Activated CD4-positive, alpha-beta memory T cell treated with anti-CD3 and anti-CD28 coated beads for 36 hours (primary cell): ENCODE measurements at regions of chr12 and their contacts with region 1.

Region 1: GRCh38 chr12:64610149-64610678 is at the start of gene RASSF3:
- DNase-seq: peak; percentile 83
- H3K4me3 Mint-ChIP-seq: peak within 1 kb of the TSS; percentile 95
- H3K27ac Mint-ChIP-seq: peak within 1 kb of the TSS; percentile 98
- H3K4me1 Mint-ChIP-seq: peaks cover 37% of the 10 kb centered on the region
- H3K27me3 Mint-ChIP-seq: no peaks in the 10 kb centered on the region
- total RNA-seq, gene RASSF3: 40.6 to 40.7 TPM

Region 2: DNA sequence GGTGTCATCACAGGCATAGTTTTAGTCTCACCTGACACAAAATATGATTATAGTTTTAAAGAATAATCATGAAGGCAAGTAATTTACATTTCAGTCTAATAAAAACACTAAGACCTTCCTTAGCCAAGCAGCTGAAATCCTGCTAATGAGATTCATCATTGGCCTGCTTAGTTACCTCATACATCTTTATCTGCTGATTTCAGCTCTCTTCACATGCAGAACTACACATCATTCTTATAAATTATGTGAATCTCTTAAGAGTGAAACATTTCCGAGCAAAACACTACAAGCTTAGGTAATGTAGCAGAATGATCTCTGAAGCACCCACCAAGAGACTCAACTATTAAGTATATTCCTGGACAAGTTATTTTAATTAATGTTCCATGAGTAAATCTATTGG is 1140.1 kb before region 1 on chr12:
- CTCF ChIA-PET with region 1: no interaction called
- POLR2A ChIA-PET with region 1: no interaction called
- intact Hi-C with region 1: no loop called
- DNase-seq: no peak
- H3K4me3 Mint-ChIP-seq: no peak overlapping the region
- H3K27ac Mint-ChIP-seq: no peak overlapping the region
- H3K4me1 Mint-ChIP-seq: no peaks in the 10 kb centered on the region
- H3K27me3 Mint-ChIP-seq: no peaks in the 10 kb centered on the region

Region 3: DNA sequence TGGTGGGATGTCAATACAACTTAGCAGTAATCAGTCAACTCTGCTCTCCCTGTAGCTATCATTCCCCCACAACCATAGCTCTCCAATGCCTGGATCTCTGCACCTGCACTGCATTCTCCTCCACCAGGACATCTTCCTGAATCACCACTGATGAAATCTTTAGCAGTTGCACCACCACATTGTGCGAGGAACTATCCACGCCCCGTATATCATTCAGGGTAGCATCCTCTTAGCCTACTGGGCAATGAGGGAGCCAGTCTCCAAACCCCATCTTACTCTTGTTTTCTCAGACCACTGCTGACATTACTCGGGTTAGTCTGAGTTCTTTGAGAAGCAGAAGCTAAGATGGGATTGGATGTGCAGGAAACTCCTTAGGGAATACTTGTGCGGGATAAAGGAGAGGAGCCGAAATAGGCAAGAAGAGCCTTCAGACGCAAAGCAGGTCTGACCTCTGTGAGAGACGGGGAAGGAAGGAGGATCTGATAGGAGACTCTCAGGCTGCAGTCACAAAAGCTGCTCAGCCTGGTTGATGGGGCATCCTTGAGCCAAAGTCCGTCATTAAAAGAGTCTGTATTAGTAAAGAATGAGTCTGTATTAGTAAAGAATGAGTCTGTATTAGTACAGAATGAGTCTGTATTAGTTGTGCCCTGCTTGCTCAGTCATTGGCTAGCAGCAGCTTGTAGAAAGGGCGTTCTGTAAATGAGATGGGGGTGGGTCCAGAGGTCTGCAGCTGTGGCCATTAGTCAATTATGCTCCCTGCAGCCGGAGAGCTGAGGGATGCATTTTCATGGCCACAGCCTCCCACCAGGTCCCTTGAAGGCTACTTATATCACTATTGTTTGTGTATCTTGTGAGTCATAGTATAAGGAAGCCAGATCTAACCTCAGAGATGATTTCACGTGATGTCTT is 49.6 kb before region 1 on chr12:
- CTCF ChIA-PET with region 1: no interaction called
- POLR2A ChIA-PET with region 1: no interaction called
- intact Hi-C with region 1: no loop called
- DNase-seq: peak; percentile 12
- H3K4me3 Mint-ChIP-seq: no peak overlapping the region
- H3K27ac Mint-ChIP-seq: no peak overlapping the region
- H3K4me1 Mint-ChIP-seq: peaks cover 2% of the 10 kb centered on the region
- H3K27me3 Mint-ChIP-seq: no peaks in the 10 kb centered on the region

Region 4: DNA sequence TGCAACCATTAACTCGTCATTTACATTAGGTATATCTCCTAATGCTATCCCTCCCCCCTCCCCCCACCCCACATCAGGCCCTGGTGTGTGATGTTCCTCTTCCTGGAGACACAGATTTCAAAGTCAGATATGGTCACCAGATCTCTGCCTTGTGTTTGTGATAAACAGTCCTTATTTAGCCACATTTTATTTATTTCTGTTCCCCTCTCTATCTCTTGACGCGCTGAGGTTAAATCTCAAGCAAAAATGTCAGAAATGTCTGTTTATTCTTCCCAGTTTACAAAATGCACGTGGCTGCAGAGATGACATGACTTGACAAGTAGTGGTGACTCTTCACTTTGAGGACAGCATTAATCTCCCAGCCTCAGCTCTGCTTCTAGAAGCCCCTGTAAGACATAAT is 11.4 kb before region 1 on chr12:
- CTCF ChIA-PET with region 1: interaction called, 6 read pairs
- POLR2A ChIA-PET with region 1: interaction called, 3 read pairs
- intact Hi-C with region 1: loop called (anchors 1 kb)
- DNase-seq: no peak
- H3K4me3 Mint-ChIP-seq: peak overlapping the region; percentile 8
- H3K27ac Mint-ChIP-seq: peak overlapping the region; percentile 6
- H3K4me1 Mint-ChIP-seq: peaks cover 38% of the 10 kb centered on the region
- H3K27me3 Mint-ChIP-seq: no peaks in the 10 kb centered on the region

Region 5: DNA sequence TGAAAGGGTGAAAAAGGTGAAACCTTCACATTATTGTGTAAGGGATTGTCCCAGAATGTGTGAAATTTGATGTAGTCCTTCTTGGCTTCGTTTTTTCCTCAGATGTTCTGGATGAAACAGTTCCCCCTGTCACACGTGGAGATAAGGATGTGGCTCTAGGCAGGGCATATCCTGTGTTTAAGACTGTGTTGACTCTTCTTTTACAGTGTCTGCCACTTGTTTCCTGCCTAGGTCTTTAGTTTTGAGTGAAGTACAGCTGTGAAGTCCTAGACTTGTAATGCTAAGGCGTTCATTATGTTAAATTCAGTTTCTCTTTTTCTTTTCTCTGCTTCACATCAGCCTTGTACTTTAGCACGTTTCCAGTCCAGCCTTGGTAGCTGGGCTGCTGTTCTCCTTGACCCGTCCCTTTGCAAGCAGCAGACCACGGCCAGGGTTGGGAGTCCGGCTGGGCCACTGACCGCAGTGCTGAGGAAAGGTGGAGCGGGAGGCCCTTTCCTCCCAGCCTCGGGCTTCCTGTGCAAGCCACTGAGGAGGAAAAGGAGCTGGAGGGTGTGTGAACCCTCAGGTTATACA is 59.1 kb after region 1 on chr12:
- CTCF ChIA-PET with region 1: interaction called, 22 read pairs
- POLR2A ChIA-PET with region 1: interaction called, 19 read pairs
- intact Hi-C with region 1: loop called (anchors 2 kb)
- DNase-seq: peak; percentile 50
- H3K4me3 Mint-ChIP-seq: peak overlapping the region; percentile 85
- H3K27ac Mint-ChIP-seq: peak overlapping the region; percentile 96
- H3K4me1 Mint-ChIP-seq: peaks cover 91% of the 10 kb centered on the region
- H3K27me3 Mint-ChIP-seq: no peaks in the 10 kb centered on the region

Region 6: GRCh38 chr12:64687816-64688215 is 77.6 kb after region 1 on chr12:
- CTCF ChIA-PET with region 1: interaction called, 8 read pairs
- POLR2A ChIA-PET with region 1: interaction called, 6 read pairs
- intact Hi-C with region 1: loop called (anchors 1 kb)
- DNase-seq: no peak
- H3K4me3 Mint-ChIP-seq: peak overlapping the region; percentile 24
- H3K27ac Mint-ChIP-seq: peak overlapping the region; percentile 69
- H3K4me1 Mint-ChIP-seq: peaks cover 74% of the 10 kb centered on the region
- H3K27me3 Mint-ChIP-seq: no peaks in the 10 kb centered on the region

Region 7: DNA sequence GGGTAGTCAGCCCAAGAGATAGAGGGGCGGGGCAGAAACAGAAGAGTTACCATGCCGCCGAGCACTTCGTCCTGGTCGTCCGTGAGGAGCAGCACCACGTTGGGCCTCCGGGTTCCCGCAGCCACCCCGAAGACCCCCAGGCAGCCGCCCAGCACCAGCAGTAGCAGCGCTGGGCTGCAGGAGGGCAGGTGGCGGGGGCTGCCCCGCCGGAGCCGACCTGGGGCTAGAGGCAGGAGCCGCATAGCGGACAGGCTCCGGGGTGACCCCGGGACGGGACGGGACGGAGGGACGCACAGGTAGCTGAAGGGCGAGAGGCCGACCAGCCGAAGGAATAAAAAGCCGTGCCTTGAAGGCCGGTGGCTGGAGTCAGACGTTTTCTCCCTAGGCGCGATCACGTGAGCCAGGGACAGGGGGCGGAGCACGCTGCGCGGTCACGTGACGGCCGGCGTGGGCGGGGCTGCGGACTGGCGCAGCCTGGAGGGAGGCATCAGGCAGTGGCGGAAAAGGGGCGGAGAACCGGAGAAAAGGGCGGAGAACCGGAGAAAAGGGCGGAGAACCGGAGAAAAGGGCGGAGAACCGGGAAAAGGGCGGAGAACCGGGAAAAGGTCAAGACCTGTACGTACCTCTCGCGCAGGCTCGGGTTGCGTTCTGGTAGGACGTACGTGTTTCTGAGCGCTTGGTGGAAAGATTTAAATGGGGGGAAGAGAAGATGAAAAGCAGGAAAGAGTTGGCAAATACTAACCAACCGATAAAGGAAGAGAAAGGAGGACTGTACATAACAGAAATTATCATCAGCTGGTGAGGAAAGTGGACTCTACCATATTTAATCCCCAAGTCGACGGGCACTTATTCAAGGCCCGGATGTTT is 149.1 kb after region 1 on chr12 and contains the start of gene GNS:
- CTCF ChIA-PET with region 1: no interaction called
- POLR2A ChIA-PET with region 1: no interaction called
- intact Hi-C with region 1: loop called (anchors 1 kb)
- DNase-seq: peak; percentile 97
- H3K4me3 Mint-ChIP-seq: peak within 1 kb of the TSS; percentile 85
- H3K27ac Mint-ChIP-seq: peak within 1 kb of the TSS; percentile 90
- H3K4me1 Mint-ChIP-seq: peaks cover 43% of the 10 kb centered on the region
- H3K27me3 Mint-ChIP-seq: no peaks in the 10 kb centered on the region
- total RNA-seq, gene GNS: 21.2 to 23.1 TPM